WTC11 (cell line): ENCODE measurements at regions of chr12 and their contacts with region 1.

Region 1: DNA sequence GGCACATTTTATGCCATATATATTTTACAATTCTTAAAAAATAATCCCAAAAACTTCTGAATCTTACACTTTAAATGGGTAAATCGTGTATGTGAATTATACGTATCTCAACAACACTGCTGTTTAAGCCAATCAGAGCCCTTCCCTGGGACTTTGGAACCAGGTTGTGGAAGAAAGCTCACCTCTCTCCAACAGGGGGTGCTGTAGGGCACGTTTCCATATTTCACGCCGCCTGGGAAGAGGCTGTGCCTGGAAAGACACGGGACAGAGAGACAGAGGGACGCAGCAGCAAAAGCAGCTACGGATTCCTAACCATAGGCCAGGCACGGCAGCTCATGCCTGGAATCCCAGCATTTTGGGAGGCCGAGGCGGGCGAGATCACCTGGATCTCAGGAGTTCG is 29.4 kb upstream of the FBRSL1 start:
- DNase-seq: peak; percentile 58
- ATAC-seq: peak; percentile 71
- H3K4me3 Mint-ChIP-seq: no peak overlapping the region
- H3K27ac Mint-ChIP-seq: no peak overlapping the region
- H3K4me1 Mint-ChIP-seq: no peaks in the 10 kb centered on the region
- H3K27me3 Mint-ChIP-seq: peaks cover 33% of the 10 kb centered on the region
- CTCF ChIP-seq: peak; percentile 37; the same call in 1 of the 2 replicates

Region 2: GRCh38 chr12:132356691-132357622 is 103.6 kb before region 1 on chr12:
- CTCF ChIA-PET with region 1: no interaction called
- POLR2A ChIA-PET with region 1: no interaction called
- DNase-seq: no peak
- ATAC-seq: peak; percentile 57
- H3K4me3 Mint-ChIP-seq: no peak overlapping the region
- H3K27ac Mint-ChIP-seq: no peak overlapping the region
- H3K4me1 Mint-ChIP-seq: peaks cover 6% of the 10 kb centered on the region
- H3K27me3 Mint-ChIP-seq: peaks cover 37% of the 10 kb centered on the region
- CTCF ChIP-seq: no peak

Region 3: DNA sequence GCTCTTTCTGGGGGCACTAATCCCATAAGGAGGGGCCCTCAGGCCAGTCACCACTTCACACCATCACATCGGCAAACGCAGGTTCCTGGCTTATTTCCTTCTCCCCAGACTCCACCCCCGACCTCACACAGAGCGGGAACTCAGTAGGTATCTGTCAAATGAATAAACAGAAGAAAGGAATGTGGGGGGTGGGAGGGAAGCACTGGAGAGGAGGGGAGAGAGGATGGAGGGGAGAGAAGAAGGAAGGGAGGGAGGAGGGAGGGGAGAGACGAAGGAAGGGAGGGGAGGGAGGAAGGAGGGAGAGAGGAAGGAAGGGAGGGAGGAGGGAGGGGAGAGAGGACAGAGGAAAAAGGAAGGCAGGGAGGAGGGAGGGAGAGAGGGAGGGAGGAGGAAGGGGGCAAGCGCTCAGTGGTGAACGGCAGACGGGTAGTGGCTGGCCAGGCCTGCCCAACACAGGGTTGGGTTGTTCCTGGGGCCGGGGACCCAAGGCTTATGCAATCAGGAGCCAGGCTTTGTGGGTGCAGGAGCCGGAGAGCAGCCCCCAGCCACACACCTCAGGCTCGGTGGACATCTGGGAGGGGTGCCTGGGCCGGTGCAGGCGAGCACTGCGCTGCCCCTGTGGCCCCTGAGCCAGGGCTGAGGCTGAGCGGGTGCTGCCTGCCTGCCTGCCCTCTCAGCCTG is 23.2 kb before region 1 on chr12:
- CTCF ChIA-PET with region 1: interaction called, 11 read pairs
- POLR2A ChIA-PET with region 1: no interaction called
- DNase-seq: peak; percentile 71
- ATAC-seq: peak; percentile 70
- H3K4me3 Mint-ChIP-seq: peak overlapping the region; percentile 47
- H3K27ac Mint-ChIP-seq: no peak overlapping the region
- H3K4me1 Mint-ChIP-seq: peaks cover 20% of the 10 kb centered on the region
- H3K27me3 Mint-ChIP-seq: peaks cover 77% of the 10 kb centered on the region
- CTCF ChIP-seq: no peak

Region 4: DNA sequence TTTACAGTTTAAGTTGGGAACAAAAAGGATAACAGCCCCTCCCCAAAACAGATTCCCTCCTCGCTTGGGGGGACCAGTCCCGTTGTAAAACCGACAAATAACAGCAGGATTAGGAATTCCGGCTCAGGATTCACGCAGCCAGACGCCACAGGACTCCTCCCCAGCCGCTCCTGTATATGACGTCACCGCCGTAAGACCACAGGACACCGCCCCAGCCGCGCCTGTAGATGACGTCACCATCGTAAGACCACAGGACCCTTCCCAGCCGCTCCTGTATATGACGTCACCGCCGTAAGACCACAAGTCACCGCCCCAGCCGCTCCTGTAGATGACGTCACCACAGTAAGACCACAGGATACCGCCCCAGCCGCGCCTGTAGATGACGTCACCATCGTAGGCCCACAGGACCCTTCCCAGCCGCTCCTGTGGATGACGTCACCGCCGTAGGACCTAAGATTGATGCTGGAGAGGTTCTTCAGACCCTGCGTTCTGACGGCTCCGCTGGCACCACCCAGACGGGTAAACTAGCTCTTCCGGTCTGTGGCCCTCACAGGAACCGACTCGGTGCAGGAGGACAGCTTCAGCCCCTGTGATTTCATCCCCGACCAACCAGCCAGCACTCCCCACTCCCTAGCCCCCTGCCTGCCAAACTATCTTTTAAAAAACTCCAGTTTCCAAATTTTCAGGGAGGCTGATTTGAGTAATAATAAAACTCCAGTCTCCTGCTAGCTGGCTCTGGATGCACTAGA is 14.5 kb before region 1 on chr12:
- CTCF ChIA-PET with region 1: interaction called, 10 read pairs
- POLR2A ChIA-PET with region 1: no interaction called
- DNase-seq: peak; percentile 83
- ATAC-seq: peak; percentile 51
- H3K4me3 Mint-ChIP-seq: peak overlapping the region; percentile 76
- H3K27ac Mint-ChIP-seq: peak overlapping the region; percentile 94
- H3K4me1 Mint-ChIP-seq: peaks cover 14% of the 10 kb centered on the region
- H3K27me3 Mint-ChIP-seq: peaks cover 85% of the 10 kb centered on the region
- CTCF ChIP-seq: no peak

Region 5: DNA sequence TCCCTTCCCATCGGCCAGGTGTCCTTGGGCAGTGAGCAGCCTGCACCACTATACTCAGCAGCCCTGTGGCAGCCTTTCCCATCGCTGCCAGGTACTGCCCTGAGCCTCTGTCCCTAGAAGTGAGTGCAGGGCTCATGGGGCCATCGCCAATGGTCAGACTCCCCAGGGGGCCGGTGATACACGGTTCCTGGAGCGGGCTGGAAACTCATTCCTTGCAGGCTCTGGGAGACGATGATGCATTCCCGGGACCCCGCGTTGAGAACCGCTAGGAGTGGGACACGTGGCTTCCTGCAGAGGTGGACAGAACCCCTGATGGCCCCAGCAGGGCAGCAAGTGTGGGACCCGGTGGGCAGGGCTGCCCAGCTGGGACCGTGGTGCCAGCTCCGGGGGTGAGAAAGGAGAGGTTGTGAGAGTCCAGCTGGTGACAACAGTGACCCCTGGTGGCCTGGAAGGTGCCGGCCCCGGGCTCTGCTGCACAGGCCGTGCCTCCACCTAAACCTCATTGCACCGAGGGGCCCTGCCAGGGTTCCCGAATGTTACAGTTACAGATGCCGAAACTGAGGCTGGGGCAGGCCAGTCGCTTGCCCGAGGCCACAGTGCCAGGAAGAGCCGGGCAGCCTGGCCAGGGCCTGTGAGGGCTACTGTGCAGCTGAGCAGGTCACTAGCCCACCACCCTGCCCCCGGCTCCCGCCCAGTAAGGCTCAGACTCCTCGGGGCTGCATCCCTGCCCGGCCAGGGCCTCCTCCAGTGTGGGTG is 63.2 kb after region 1 on chr12:
- CTCF ChIA-PET with region 1: interaction called, 21 read pairs
- POLR2A ChIA-PET with region 1: no interaction called
- DNase-seq: peak; percentile 86
- ATAC-seq: peak; percentile 80
- H3K4me3 Mint-ChIP-seq: no peak overlapping the region
- H3K27ac Mint-ChIP-seq: no peak overlapping the region
- H3K4me1 Mint-ChIP-seq: peaks cover 5% of the 10 kb centered on the region
- H3K27me3 Mint-ChIP-seq: peaks cover 29% of the 10 kb centered on the region
- CTCF ChIP-seq: peak; percentile 80